GM12878 (cell line): ENCODE measurements at regions of chr2 and their contacts with region 1.

Region 1: DNA sequence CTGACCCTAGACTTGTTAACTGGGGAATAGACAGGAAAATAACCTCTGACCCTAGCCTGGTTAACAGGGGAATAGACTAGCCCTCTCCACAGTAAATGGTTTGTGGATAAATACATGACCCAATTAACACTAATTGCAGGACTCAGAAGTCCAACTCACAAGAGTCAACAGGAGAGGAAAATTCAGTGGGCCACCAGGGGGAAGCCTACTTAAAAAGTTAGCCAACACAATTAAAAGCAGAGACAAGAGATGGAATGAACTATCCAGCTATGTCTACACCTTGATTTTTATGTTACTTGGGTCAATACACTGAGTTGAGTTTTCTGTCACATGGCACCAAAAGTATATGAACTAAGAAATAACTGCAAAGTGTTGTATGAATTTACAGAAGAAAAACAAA is 158.8 kb upstream of the SLC39A10 start:
- DNase-seq: no peak
- ATAC-seq: peak; percentile 78
- H3K4me3 ChIP-seq: no peak overlapping the region
- H3K27ac ChIP-seq: no peak overlapping the region
- H3K4me1 ChIP-seq: no peaks in the 10 kb centered on the region
- H3K27me3 ChIP-seq: no peaks in the 10 kb centered on the region
- CTCF ChIP-seq: peak; percentile 33 to 56 (median 44)
- EP300 ChIP-seq: no peak
- POLR2A ChIP-seq: no peak
- RAD21 ChIP-seq: peak; percentile 70

Region 2: GRCh38 chr2:195486987-195487644 is 11.1 kb before region 1 on chr2:
- CTCF ChIA-PET with region 1: interaction called, 17 read pairs
- POLR2A ChIA-PET with region 1: interaction called, 3 read pairs
- RAD21 ChIA-PET with region 1: interaction called, 5 read pairs
- SMC1A ChIA-PET with region 1: interaction called, 30 read pairs
- in situ Hi-C with region 1: no loop called
- intact Hi-C with region 1: no loop called
- DNase-seq: no peak
- ATAC-seq: peak; percentile 94
- H3K4me3 ChIP-seq: no peak overlapping the region
- H3K27ac ChIP-seq: no peak overlapping the region
- H3K4me1 ChIP-seq: no peaks in the 10 kb centered on the region
- H3K27me3 ChIP-seq: no peaks in the 10 kb centered on the region
- CTCF ChIP-seq: no peak
- EP300 ChIP-seq: no peak
- POLR2A ChIP-seq: no peak
- RAD21 ChIP-seq: no peak

Region 3: GRCh38 chr2:195543902-195544894 is 46.0 kb after region 1 on chr2:
- CTCF ChIA-PET with region 1: no interaction called
- POLR2A ChIA-PET with region 1: no interaction called
- RAD21 ChIA-PET with region 1: interaction called, 62 read pairs
- SMC1A ChIA-PET with region 1: interaction called, 10 read pairs
- in situ Hi-C with region 1: no loop called
- intact Hi-C with region 1: no loop called
- DNase-seq: no peak
- ATAC-seq: peak; percentile 94
- H3K4me3 ChIP-seq: no peak overlapping the region
- H3K27ac ChIP-seq: no peak overlapping the region
- H3K4me1 ChIP-seq: no peaks in the 10 kb centered on the region
- H3K27me3 ChIP-seq: no peaks in the 10 kb centered on the region
- CTCF ChIP-seq: no peak
- EP300 ChIP-seq: peak; percentile 25 to 56; a peak in 1 of 4 replicates
- POLR2A ChIP-seq: no peak
- RAD21 ChIP-seq: no peak